ENCODE measurements at regions of chr10 and their contacts with region 1.

Region 1: GRCh38 chr10:89481662-89482061 is 53.7 kb downstream of the SLC16A12 start:
- DNase-seq: no peak

Region 2: DNA sequence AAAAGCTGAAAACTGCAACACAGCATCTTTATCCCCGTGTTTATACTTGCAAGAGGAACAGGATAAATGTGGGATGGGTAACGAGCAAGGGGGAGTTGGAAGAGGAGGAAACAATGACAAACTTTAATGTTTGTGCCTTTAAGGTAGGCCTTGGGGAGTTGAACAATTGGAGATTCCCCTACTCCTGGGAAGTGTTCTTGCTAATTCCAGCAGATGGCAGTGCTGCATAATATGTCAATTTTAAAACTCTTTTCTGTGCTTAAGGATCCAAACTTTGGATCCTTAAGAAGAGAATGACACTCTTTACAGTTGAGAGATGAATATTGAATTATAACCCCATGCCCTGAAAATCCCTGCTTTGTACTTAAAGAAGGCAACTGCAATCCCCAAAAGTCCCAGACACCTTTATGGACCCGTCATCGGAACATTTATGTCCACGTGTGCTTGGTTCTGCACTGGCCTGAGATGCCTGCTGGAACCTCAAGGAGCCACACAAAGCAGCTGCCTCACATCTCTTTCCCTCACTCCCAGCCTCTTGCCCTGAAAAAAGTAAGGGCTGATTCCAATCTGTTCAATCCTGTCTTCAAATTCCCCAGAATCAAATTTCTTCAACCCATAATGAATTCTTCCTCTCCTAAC is 55.3 kb before region 1 on chr10:
- intact Hi-C with region 1: loop called (anchors 5 kb)
- DNase-seq: no peak

Region 3: DNA sequence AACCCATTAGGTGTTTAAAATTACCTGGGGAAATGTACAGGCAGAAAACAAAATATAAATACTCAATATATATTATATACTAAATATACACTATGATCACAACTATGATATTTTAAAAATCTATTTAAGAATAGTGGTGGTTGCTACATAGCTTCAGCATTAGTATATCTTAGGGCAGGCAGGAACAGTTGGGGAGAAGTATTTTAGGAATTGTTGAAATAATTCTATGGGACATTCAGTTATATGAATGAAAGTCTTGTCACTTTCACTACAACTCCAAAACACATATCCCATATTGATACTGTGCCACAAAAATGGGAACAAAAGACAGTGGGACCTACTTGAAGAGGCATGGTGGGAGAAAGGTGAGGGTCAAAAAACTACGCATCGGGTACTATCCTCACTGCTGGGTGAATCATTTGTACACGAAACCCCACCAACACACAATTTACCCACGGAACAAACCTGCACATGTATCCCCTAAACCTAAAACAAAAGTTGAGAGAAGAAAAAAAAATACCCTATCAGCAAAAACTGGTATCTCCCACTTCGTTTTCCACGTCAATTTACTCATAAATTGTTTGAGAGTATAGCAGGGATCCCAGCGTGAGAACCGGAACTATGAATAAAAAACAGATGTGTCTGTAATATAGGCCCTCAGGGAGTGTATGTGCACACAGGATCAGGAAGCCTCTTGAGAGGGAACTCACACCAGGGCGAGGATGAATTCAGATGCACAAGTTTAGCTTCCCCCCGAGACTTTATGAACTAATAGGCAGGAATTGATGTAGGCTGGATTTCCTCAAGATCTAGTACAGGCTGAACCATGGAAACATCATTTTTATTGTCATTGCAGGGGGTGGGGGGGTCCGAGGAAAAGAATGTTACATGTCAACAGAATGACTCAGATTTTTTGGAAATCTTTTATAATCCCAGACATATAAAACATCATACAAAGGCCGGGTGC is 37.5 kb after region 1 on chr10:
- intact Hi-C with region 1: loop called (anchors 2 kb)
- DNase-seq: no peak

Region 4: GRCh38 chr10:89553064-89553734 is 71.5 kb after region 1 on chr10:
- intact Hi-C with region 1: loop called (anchors 10 kb)
- DNase-seq: no peak